ENCODE measurements at regions of chr10 and their contacts with region 1.

Region 1: DNA sequence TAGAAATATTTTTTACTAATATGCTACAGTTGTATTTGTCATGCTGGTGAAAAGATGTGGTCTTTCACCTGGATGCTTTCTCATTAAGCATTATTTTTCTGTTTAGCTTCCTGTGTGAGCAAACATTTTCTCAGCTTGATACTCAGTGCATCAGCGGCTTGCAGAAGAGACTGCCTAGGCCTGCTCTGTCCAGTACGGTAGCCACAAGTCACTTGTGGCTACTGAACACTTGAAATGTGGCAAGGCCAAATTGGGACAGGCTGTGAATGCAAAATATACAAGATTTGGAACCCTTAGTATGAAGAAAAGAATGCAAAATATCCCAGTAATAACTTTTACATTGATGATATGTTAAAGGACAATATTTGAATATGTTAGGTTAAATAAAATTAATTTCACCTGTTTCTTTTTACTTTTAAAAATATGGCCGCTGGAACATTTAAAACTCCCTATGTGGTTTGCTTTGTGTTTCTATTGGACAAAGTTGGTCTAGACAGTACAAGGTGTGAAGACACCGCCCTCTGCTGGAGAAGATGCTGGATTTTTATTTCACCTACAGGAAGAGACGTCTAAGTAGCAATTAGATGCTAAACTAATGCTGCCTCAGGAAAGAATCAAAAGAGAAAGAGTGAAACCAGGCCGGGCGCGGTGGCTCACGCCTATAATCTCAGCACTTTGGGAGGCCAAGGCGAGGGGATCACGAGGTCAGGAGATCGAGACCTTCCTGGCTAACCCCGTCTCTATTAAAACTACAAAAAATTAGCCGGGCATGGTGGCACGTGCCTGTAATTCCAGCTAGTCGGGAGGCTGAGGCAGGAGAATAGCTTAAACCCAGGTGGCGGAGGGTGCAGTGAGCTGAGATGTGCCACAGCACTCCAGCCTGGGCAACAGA is 5.3 kb downstream of the SRGN start:
- DNase-seq: peak; percentile 77 to 95 (median 83)
- H3K4me3 ChIP-seq: no peak overlapping the region
- H3K27ac ChIP-seq: no peak overlapping the region
- H3K4me1 ChIP-seq: peaks cover 0 to 4% of the 10 kb centered on the region in 2 donors
- H3K27me3 ChIP-seq: no peaks in the 10 kb centered on the region
- CTCF ChIP-seq: peak; percentile 79 to 87 (median 82)
- POLR2A ChIP-seq: no peak

Region 2: DNA sequence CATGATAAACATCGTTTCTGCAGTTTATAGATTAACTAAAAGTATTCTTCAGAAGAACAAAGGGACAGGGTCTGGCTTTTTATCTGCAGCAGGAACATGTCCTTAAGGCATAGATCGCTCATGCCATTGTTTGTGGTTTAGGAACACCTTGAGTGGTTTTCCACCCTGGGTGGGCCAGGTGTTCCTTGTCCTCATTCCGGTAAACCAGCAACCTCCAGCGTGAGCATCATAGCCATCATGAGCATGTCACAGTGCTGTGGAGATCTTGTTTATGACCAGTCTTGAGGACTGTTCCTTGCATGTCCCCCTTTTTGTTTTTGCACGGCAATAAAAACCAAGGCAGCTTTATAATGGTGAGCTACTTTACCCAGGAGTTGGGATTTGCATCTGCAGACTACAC is 232.0 kb before region 1 on chr10:
- intact Hi-C with region 1: no loop called
- DNase-seq: no peak
- H3K4me3 ChIP-seq: no peak overlapping the region
- H3K27ac ChIP-seq: no peak overlapping the region
- H3K4me1 ChIP-seq: no peaks in the 10 kb centered on the region
- H3K27me3 ChIP-seq: no peaks in the 10 kb centered on the region
- CTCF ChIP-seq: no peak
- POLR2A ChIP-seq: no peak

Region 3: GRCh38 chr10:68992636-68993440 is 100.4 kb before region 1 on chr10:
- intact Hi-C with region 1: loop called in 1 of 2 experiments (anchors 10 kb)
- DNase-seq: peak; percentile 30 to 86 (median 73)
- H3K4me3 ChIP-seq: peak overlapping the region in 1 of 4 donors; percentile 20
- H3K27ac ChIP-seq: peak overlapping the region; percentile 9 to 71 (median 55)
- H3K4me1 ChIP-seq: peaks cover 35 to 56% of the 10 kb centered on the region in 2 donors
- H3K27me3 ChIP-seq: no peaks in the 10 kb centered on the region
- CTCF ChIP-seq: no peak
- POLR2A ChIP-seq: no peak

Region 4: GRCh38 chr10:69004821-69005220 is 88.4 kb before region 1 on chr10:
- intact Hi-C with region 1: loop called in 1 of 2 experiments (anchors 10 kb)
- DNase-seq: no peak
- H3K4me3 ChIP-seq: no peak overlapping the region
- H3K27ac ChIP-seq: no peak overlapping the region
- H3K4me1 ChIP-seq: peaks cover 0 to 3% of the 10 kb centered on the region in 2 donors
- H3K27me3 ChIP-seq: no peaks in the 10 kb centered on the region
- CTCF ChIP-seq: peak; percentile 32 to 61 (median 50)
- POLR2A ChIP-seq: no peak